Natural killer cell (primary cell): ENCODE measurements at regions of chr5 and their contacts with region 1.

Region 1: DNA sequence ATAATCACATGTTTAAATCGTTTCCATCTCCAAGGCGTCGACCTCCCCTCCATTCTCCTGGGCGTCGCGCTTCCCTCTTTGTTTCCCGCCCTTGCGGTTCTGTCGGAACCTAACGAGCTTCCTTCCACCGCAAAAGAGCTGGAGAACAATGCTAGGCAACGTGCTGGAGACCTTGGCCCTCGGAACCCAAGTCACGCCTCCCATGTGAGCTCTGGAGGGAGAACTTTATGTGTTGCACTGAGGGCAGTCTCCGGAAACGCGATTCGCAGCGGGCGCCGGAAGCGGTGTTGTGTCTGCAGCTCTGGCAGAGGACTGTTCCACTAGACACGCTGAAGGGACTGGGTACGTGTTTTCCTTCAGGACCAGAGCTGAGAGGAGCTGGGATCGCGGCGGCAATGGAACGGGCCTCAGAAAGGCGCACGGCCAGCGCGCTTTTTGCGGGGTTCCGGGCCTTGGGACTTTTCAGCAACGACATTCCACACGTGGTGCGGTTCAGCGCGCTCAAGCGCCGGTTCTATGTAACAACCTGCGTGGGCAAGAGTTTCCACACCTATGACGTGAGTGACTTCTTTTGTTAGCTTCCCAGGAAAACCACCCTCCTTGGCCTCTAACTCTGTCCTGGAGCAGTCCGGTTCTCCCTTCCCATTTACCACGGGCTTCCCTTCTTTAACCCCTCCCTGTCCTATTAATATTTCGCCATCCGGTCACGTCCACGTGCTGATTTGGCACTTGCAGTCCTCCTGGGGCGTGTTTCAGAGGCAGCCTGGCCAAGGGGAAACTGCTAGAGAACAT is at the start of gene WDR36:
- DNase-seq: peak; percentile 81 to 94
- ATAC-seq: peak; percentile 94 to 99 (median 96)
- H3K4me3 ChIP-seq: peak within 1 kb of the TSS; percentile 89
- H3K4me3 Mint-ChIP-seq: peak within 1 kb of the TSS; percentile 94
- H3K27ac ChIP-seq: peak within 1 kb of the TSS; percentile 77
- H3K27ac Mint-ChIP-seq: peak within 1 kb of the TSS; percentile 91 to 96
- H3K4me1 ChIP-seq: peaks cover 4% of the 10 kb centered on the region
- H3K4me1 Mint-ChIP-seq: peaks cover 30 to 39% of the 10 kb centered on the region in 2 donors
- H3K27me3 ChIP-seq: no peaks in the 10 kb centered on the region
- H3K27me3 Mint-ChIP-seq: peaks cover 0 to 17% of the 10 kb centered on the region in 2 donors
- CTCF ChIP-seq: no peak
- total RNA-seq, gene WDR36: 23.0 to 24.8 (median 23.9) TPM

Region 2: DNA sequence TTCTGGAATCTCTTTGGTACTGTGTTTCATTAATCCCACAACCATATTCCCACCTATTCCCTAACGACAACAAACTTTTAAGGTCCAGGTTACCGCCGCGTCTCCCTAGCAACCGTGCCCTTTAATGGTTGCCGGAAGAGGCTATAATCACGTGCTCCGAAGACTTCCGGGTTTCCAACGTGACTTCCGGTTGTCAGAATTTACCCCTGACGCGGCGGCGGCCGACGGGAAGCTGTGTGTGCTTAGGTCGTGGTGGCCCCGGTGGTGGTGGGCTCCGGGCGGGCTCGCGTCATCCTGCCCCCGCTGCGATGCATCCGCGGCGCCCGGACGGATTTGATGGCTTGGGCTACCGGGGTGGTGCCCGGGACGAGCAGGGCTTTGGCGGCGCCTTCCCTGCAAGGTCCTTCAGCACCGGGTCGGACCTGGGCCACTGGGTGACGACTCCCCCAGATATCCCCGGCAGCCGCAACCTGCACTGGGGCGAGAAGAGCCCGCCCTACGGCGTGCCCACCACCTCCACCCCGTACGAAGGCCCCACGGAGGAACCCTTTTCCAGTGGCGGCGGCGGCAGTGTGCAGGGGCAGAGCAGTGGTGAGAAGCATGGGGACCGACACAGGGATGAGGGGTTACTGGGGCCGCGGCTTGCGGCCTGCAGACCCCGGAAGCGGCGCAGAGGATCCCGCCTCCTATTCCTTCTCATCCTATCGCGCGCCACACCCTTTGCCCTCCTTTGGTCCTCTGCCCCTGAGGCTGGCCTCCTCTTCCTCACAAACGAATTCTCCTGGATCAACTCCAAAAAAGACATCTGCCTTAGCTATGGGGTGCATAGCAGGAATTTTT is 353.2 kb before region 1 on chr5 and contains the start of gene SLC25A46:
- intact Hi-C with region 1: loop called (anchors 2 kb)
- DNase-seq: peak; percentile 84 to 96
- ATAC-seq: peak; percentile 77 to 90 (median 87)
- H3K4me3 ChIP-seq: peak within 1 kb of the TSS; percentile 87
- H3K4me3 Mint-ChIP-seq: peak within 1 kb of the TSS; percentile 97
- H3K27ac ChIP-seq: peak within 1 kb of the TSS; percentile 88
- H3K27ac Mint-ChIP-seq: peak within 1 kb of the TSS; percentile 96 to 97
- H3K4me1 ChIP-seq: peaks cover 10% of the 10 kb centered on the region
- H3K4me1 Mint-ChIP-seq: peaks cover 27 to 36% of the 10 kb centered on the region in 2 donors
- H3K27me3 ChIP-seq: peaks cover 3% of the 10 kb centered on the region
- H3K27me3 Mint-ChIP-seq: peaks cover 7 to 14% of the 10 kb centered on the region in 2 donors
- CTCF ChIP-seq: no peak
- total RNA-seq, gene SLC25A46: 25.5 to 35.4 (median 34.5) TPM

Region 3: GRCh38 chr5:111072949-111073682 is 19.1 kb before region 1 on chr5:
- intact Hi-C with region 1: no loop called
- DNase-seq: peak in 1 of 2 donors; percentile 62
- ATAC-seq: peak; percentile 57 to 83 (median 61)
- H3K4me3 ChIP-seq: peak overlapping the region; percentile 37
- H3K4me3 Mint-ChIP-seq: peak overlapping the region; percentile 87
- H3K27ac ChIP-seq: no peak overlapping the region
- H3K27ac Mint-ChIP-seq: no peak overlapping the region
- H3K4me1 ChIP-seq: peaks cover 8% of the 10 kb centered on the region
- H3K4me1 Mint-ChIP-seq: peaks cover 14 to 16% of the 10 kb centered on the region in 2 donors
- H3K27me3 ChIP-seq: peaks cover 44% of the 10 kb centered on the region
- H3K27me3 Mint-ChIP-seq: peaks cover 61 to 73% of the 10 kb centered on the region in 2 donors
- CTCF ChIP-seq: no peak

Region 4: DNA sequence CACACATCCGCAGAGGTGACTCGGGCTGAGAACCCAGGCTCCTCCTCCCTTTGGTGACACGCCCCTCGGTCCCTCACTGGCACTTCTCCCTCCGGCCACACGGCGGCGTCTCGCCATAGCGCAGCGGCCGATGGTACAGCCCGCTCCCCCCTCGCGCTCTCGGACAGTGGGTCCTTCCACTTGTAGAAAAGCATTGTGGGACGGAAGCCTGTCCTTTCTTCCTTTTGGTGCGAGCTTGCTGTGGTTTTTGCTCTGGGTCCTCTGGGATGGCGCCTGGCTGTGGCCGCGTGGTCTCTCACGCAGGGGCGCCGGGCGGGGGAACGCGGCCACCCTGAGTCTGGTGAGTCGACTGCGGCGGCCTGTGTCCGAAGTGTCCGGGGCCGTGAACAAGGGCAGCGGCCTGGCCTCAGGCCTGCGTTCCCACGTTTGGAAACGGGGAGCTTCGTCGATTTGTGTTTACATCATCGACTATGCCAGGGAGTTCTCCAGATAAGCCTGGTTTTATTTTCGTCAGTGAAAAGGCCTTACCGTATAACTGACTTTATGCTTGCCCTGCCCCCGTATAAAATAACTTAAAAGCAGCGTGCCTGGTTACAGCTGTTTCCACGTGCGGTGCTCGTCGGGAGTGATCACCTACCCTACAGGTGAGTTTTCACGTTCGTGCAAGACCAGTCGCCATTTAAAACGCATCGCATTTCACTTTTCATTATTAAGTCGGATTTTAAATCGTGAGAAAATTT is 1068.6 kb after region 1 on chr5:
- intact Hi-C with region 1: loop called (anchors 2 kb)
- DNase-seq: peak; percentile 92 to 96
- ATAC-seq: peak; percentile 99 to 100 (median 99)
- H3K4me3 ChIP-seq: peak overlapping the region; percentile 85
- H3K4me3 Mint-ChIP-seq: peak overlapping the region; percentile 97
- H3K27ac ChIP-seq: peak overlapping the region; percentile 57
- H3K27ac Mint-ChIP-seq: peak overlapping the region; percentile 88
- H3K4me1 ChIP-seq: peaks cover 11% of the 10 kb centered on the region
- H3K4me1 Mint-ChIP-seq: peaks cover 37 to 40% of the 10 kb centered on the region in 2 donors
- H3K27me3 ChIP-seq: no peaks in the 10 kb centered on the region
- H3K27me3 Mint-ChIP-seq: peaks cover 9 to 15% of the 10 kb centered on the region in 2 donors
- CTCF ChIP-seq: peak; percentile 89